A549 (cell line): ENCODE measurements at regions of chrX and their contacts with region 1.

Region 1: DNA sequence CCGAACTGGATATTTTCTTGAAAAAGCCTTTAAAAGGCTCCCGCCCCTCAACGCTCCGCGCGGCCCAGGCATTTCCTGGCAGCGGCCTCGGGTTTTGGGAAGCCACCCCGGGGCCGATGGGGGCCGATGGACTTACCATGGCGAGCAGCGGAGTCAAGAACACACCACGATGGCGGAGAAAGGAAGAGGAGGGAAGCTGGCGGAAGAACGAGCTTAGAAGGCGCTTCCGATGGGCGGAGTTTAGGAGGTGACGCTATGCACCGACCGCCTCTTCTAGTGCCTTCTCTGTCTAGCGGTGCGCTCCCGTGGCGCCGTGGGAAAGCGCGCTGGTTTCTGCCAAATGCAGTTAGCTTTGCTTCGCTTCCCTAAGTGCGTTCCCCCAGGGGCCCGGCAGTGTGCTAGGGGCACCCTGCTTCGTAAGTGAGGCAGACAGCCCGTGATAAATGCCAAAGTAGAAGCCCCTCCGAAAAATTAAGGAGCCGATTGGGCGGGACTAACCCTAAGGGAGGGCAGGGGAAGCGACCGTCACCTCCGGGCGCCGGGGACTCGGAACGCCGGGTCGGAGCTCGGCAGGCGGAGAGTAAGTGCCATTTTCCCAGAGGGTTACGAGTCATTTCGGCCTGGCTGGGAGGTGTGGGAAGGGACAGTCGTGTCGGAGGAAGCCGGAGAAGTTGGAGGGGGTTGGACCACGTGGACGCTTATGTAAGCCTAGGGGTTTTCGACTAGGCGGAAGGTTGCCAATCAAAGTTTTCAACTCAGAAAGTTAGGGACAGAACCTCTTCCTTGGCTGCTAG is at the start of gene RPL39:
- DNase-seq: peak; percentile 57 to 93
- ATAC-seq: peak; percentile 96
- H3K4me3 ChIP-seq: peak within 1 kb of the TSS; percentile 91
- H3K27ac ChIP-seq: peak within 1 kb of the TSS; percentile 87 to 94
- H3K4me1 ChIP-seq: peaks cover 29% of the 10 kb centered on the region
- CTCF ChIP-seq: no peak
- EP300 ChIP-seq: no peak
- POLR2A ChIP-seq: peak; percentile 88
- RAD21 ChIP-seq: no peak
- polyA plus RNA-seq, gene RPL39: 3,499 and 3,669 TPM in 2 replicates

Region 2: DNA sequence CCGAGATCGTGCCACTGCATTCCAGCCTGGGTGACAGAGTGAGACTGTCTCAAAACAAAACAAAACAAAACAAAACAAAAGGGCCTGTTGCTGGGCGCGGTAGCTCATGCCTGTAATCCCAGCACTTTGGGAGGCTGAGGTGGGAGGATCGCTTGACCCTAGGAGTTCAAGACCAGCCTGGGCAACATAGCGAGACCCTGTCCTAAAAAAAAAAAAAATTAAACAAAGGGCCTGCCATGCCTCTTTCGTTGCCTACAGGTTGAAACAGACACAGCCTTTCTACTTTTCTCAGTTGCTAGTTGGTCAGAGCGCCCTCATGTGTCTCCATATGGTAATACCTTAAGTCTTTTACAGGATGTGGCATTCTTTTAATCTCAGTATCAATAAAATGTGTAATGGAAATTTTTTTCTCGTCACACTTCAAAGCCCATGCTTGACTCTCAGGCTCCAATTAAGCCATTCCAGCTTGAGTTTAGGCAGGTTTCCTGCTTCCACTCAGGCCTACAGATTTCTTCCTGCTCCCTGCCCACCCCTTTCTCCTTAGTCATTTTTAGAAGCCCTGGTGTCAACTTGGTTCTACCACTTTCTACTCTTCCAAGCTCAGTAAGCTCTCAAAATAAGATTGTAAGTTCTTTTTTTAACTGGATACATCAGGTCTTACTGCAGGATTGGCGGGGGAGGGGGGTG is 37.9 kb before region 1 on chrX:
- CTCF ChIA-PET with region 1: no interaction called
- POLR2A ChIA-PET with region 1: interaction called, 20 read pairs
- DNase-seq: peak in 1 of 2 experiments; percentile 59
- ATAC-seq: peak in 1 of 2 experiments; percentile 19; a peak in 1 of 6 replicates
- H3K4me3 ChIP-seq: no peak overlapping the region
- H3K27ac ChIP-seq: no peak overlapping the region
- H3K4me1 ChIP-seq: no peaks in the 10 kb centered on the region
- CTCF ChIP-seq: peak; percentile 51
- EP300 ChIP-seq: no peak
- POLR2A ChIP-seq: no peak
- RAD21 ChIP-seq: peak in 1 of 2 experiments; percentile 42; a peak in 2 of 5 replicates

Region 3: GRCh38 chrX:119852382-119853353 is 61.0 kb after region 1 on chrX and contains the start of gene UPF3B:
- CTCF ChIA-PET with region 1: no interaction called
- POLR2A ChIA-PET with region 1: interaction called, 40 read pairs
- DNase-seq: peak; percentile 98 to 99
- ATAC-seq: peak; percentile 94 to 96
- H3K4me3 ChIP-seq: peak within 1 kb of the TSS; percentile 68
- H3K27ac ChIP-seq: peak within 1 kb of the TSS; percentile 89 to 94
- H3K4me1 ChIP-seq: no peaks in the 10 kb centered on the region
- CTCF ChIP-seq: no peak
- EP300 ChIP-seq: no peak
- POLR2A ChIP-seq: peak; percentile 79
- RAD21 ChIP-seq: no peak
- polyA plus RNA-seq, gene UPF3B: 14.3 and 27.6 TPM in 2 replicates

Region 4: DNA sequence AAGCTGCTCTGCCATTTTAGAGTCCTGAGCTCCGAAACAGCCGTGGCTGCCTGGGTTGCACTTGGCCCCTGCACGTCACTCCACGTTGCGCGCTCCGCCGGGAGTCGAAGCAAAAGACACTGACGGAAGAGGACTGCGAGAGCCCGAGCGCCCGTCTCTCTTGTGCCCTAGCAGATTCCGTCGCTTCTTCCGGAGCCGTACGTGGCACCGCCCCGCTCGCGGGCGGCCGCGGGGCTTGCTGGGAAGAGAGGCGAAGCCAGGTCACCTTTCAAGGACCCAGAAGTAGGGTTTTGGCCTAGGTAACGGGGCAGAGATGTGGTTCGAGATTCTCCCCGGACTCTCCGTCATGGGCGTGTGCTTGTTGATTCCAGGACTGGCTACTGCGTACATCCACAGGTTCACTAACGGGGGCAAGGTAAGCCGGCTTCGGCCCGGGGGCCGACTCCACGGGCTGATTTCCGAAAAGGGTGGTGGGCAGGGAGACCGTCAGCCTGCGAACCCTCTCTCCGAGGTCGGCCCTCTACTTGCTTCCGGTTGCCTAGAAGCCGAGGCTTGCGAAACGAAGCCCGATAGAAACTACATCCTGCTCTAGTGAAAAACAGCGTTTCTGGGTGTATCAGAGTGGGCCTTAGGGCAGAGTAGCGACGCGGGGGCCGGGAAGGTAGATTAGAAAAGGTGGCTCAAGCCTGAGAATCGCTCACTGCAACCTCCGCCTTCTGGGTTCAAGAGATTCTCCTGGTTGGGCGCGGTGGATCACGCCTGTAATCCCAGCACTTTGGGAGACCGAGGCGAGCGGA is 80.2 kb after region 1 on chrX and contains the starts of genes NDUFA1 and RNF113A:
- CTCF ChIA-PET with region 1: no interaction called
- POLR2A ChIA-PET with region 1: interaction called, 22 read pairs
- DNase-seq: peak; percentile 82 to 92
- ATAC-seq: peak; percentile 95 to 98
- H3K4me3 ChIP-seq: peak within 1 kb of the TSS; percentile 76
- H3K27ac ChIP-seq: peak within 1 kb of the TSS; percentile 96 to 99
- H3K4me1 ChIP-seq: peaks cover 17% of the 10 kb centered on the region; the same call in 1 of the 3 replicates
- CTCF ChIP-seq: no peak
- EP300 ChIP-seq: no peak
- POLR2A ChIP-seq: peak; percentile 80
- RAD21 ChIP-seq: no peak
- polyA plus RNA-seq, gene NDUFA1: 249 and 435 TPM in 2 replicates
- polyA plus RNA-seq, gene RNF113A: 16.5 and 18.5 TPM in 2 replicates

Region 5: GRCh38 chrX:119887721-119888425 is 96.2 kb after region 1 on chrX:
- CTCF ChIA-PET with region 1: interaction called, 8 read pairs
- POLR2A ChIA-PET with region 1: interaction called, 12 read pairs
- DNase-seq: peak; percentile 78 to 84
- ATAC-seq: peak; percentile 99
- H3K4me3 ChIP-seq: peak overlapping the region; percentile 57
- H3K27ac ChIP-seq: peak overlapping the region; percentile 62 to 87
- H3K4me1 ChIP-seq: no peaks in the 10 kb centered on the region
- CTCF ChIP-seq: peak; percentile 53
- EP300 ChIP-seq: no peak
- POLR2A ChIP-seq: no peak
- RAD21 ChIP-seq: peak; percentile 21 to 41; a peak in 3 of 5 replicates